ENCODE measurements at regions of chr11 and their contacts with region 1.

Region 1: DNA sequence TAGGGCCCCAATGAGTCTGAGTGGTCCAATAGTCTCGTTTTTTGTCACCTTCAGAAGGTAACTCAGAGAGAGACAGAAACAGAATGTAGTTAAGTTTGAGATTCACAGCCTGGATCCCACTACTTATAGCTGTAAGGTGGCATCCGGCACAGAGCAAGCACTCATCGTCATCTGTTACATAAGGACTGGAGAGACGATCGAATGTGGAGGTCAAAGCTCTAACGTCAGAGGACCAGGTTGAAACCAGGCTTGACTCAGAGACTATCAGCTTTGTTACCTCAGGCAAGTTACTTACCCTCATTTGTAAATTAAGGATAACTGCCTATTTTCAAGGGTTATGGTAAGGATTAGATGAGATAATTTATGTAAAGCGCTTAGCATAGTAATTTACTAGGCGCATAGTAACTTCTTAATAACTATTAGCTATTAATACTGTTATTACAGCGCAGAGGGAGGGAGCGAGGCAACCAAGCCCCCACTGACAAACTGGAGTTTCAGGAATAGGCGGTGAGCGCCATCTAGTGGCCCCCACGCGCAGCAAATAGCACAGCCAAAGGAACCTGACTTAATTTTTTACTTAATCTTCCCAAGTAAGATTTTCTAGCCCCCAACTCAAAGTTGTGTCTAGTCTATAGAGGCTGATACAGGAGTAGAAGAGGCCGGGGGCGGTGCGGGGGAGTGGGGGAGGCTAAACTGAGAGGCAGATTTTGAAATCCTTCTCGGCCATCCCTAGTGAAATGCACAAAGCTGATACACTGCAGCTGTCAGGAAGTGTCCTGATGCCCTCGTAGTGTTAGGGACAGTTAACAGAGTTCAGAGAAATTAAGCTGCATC is 29.0 kb upstream of the API5 start:
- DNase-seq: peak; percentile 58
- ATAC-seq: no peak
- H3K4me3 Mint-ChIP-seq: no peak overlapping the region
- H3K27ac Mint-ChIP-seq: no peak overlapping the region
- H3K4me1 Mint-ChIP-seq: no peaks in the 10 kb centered on the region
- H3K27me3 Mint-ChIP-seq: peaks cover 8% of the 10 kb centered on the region
- CTCF ChIP-seq: peak; percentile 85

Region 2: DNA sequence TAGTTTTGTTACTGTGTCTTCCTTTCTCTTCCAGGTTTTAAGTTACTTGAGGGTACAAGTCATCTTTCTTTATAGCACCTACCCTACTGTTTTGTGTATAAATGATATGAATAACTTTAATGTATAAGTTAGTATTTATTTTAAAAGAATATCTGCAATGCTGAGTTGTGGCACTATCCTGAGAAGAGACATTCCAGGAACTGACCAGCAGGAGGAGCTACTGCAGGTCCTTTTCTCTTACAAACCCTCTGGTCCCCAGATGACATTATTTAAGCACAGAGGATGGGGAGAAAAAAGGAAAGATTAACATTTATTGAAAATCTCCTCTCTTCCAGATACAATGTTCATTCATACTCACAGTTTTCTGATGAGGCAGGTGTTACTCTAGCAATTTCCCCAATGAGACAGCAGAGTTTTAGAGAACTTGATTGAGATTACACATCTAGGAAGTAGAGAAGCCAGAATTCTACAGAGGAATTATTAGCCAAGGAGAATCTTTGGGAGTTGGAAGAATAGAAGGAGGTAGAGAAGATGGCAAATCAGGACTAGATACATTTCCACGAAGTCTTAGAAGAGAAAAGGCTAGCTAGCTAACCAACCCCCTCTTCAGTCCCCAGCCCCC is 512.3 kb before region 1 on chr11:
- CTCF ChIA-PET with region 1: interaction called, 4 read pairs
- POLR2A ChIA-PET with region 1: no interaction called
- intact Hi-C with region 1: loop called (anchors 5 kb)
- DNase-seq: peak; percentile 14
- ATAC-seq: no peak
- H3K4me3 Mint-ChIP-seq: no peak overlapping the region
- H3K27ac Mint-ChIP-seq: no peak overlapping the region
- H3K4me1 Mint-ChIP-seq: no peaks in the 10 kb centered on the region
- H3K27me3 Mint-ChIP-seq: peaks cover 1% of the 10 kb centered on the region
- CTCF ChIP-seq: peak; percentile 48

Region 3: DNA sequence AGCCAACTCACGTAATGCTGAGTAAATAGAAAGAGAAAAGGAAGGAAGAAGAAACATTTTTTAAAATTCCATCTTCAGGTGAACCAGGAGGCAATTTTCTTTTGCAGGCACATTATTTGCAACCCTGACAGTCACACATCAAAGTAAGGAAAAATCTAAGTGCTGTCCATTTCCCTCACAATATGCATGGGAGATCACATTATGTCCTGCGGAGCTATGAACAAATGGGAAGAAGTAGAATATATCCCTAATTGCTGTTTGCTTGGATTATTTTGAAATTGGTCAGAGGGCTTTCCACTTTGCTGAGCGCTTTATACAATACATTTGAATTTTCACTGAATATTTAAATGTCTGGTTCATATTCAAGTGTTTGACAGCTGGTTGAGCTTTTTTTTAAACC is 104.8 kb before region 1 on chr11:
- CTCF ChIA-PET with region 1: interaction called, 11 read pairs
- POLR2A ChIA-PET with region 1: no interaction called
- intact Hi-C with region 1: no loop called
- DNase-seq: no peak
- ATAC-seq: no peak
- H3K4me3 Mint-ChIP-seq: no peak overlapping the region
- H3K27ac Mint-ChIP-seq: no peak overlapping the region
- H3K4me1 Mint-ChIP-seq: no peaks in the 10 kb centered on the region
- H3K27me3 Mint-ChIP-seq: no peaks in the 10 kb centered on the region
- CTCF ChIP-seq: no peak

Region 4: GRCh38 chr11:43298397-43298796 is 15.6 kb after region 1 on chr11:
- CTCF ChIA-PET with region 1: interaction called, 13 read pairs
- POLR2A ChIA-PET with region 1: no interaction called
- intact Hi-C with region 1: no loop called
- DNase-seq: no peak
- ATAC-seq: no peak
- H3K4me3 Mint-ChIP-seq: no peak overlapping the region
- H3K27ac Mint-ChIP-seq: no peak overlapping the region
- H3K4me1 Mint-ChIP-seq: no peaks in the 10 kb centered on the region
- H3K27me3 Mint-ChIP-seq: peaks cover 10% of the 10 kb centered on the region
- CTCF ChIP-seq: no peak